ENCODE measurements at regions of chr4 and their contacts with region 1.

Region 1: DNA sequence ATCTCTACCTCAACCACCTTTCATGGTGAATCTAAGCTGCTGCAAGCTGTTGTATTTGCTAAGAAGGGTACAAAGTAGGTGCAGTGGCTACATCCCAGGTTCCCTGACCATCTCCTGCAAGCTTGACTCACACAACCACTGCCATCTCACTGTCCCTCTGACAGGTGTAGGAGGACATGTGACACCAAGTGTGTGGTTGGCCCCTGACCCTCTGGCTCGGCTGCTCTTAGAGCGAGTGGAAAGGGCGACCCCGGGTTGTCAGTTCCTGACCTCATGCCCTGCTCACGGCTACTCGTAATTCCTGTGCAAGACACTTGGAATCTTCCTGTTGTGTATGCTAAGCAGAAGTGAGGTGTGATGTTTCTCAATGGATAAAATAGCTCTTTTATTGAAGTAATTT is 184.4 kb downstream of the DCLK2 start:
- DNase-seq: no peak

Region 2: DNA sequence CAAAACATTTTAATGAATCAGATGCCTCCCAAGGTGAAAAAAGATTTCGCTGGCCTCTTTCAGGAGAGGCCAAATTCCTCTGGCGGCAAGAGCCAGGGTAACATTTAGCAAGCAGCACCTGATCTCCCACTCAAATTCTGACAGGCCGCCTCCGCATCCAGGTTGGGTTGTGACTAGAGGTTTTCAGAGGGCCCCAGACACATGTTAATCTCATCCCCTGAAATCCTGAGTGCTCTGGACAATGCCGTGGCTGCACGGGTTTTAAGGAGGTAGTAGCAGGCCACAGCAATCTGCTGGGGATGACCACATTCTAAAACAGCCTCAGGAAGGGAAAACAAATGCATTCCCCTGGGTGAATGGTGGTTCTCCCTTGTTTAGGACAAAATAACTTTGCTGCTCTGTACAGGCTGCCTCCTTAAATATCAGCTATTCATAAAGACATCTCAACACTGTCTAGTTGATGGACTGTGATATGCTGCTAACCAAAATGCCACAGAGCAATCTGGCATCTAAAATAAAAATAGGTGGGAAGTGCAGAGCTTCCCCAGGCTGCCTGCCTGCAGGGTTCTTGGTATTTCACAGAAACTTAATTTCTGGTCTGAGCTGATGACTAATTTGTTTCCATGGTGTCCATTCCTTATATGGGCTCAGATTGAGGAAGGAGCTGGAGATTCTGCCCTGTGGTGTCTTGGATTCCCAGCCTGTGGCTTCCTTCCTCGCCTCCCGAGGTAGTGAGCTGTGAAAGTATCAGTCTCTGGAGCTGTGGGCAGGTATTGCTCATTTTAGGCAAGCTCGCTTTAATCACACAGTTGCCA is 17.7 kb after region 1 on chr4:
- intact Hi-C with region 1: loop called in 1 of 2 experiments (anchors 1 kb)
- DNase-seq: no peak